Activated CD4-positive, alpha-beta memory T cell treated with anti-CD3 and anti-CD28 coated beads for 36 hours (primary cell): ENCODE measurements at regions of chr12 and their contacts with region 1.

Region 1: DNA sequence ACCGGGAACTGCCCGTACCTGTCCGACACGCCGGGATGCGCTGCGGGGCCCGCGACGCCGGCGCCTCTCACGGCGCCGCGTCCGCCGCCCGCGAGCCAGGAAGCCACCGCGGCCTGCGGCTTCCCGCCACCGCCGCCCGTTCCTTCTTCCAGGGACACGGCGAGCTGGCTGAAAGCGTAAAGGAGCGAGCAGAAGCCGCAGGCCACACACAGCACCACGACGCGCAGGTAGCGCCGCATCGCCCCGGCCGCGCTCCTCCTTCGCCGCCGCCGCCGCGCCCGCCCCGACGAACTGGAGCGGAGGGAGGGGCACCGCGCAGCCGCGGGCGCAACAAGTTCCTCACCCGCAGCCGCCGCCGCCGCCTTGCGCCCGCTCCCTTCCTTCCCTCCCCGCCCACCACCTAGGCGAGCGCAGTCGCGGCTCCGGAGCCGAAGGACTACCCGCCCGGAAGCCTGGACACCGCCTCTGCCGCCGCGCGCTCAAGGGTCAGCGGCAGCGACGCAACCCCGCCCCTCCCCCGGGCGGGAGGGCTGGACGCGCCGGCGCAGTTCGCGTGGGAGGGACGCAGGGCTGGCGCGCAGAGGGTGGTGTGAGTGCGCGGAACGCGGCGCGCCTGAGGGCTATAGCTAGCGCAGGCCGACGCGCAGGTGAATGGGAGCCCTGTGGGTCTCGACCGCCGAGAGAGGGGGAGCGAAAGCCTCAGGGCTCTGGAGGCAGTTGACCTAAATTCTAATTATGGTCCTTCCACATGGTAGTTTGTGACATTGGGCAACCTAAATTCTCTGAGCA is at the start of gene GXYLT1:
- DNase-seq: peak; percentile 88
- H3K4me3 Mint-ChIP-seq: peak within 1 kb of the TSS; percentile 93
- H3K27ac Mint-ChIP-seq: peak within 1 kb of the TSS; percentile 75
- H3K4me1 Mint-ChIP-seq: peaks cover 35% of the 10 kb centered on the region
- H3K27me3 Mint-ChIP-seq: no peaks in the 10 kb centered on the region
- total RNA-seq, gene GXYLT1: 7.0 to 8.3 TPM

Region 2: DNA sequence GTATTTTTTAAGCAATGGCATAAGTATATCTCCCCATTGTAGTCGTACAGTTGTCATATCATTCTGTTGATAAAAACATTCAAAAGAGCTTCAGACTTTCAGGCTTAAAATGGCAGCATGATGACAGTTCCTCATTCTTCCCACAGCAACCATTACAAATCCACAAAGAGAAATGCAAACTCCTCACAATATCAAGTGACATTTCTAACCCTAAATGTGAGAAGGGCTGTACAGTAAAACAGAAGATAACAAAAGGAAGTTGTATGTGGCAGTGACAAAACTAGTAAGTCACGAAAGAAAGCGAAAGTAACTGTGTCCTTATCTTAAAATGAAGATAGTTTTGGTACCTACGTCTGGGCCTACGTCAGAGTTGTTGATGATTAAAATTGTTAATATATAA is 46.6 kb before region 1 on chr12:
- CTCF ChIA-PET with region 1: no interaction called
- POLR2A ChIA-PET with region 1: no interaction called
- intact Hi-C with region 1: loop called (anchors 5 kb)
- DNase-seq: no peak
- H3K4me3 Mint-ChIP-seq: peak overlapping the region; percentile 71
- H3K27ac Mint-ChIP-seq: peak overlapping the region; percentile 85
- H3K4me1 Mint-ChIP-seq: peaks cover 29% of the 10 kb centered on the region
- H3K27me3 Mint-ChIP-seq: no peaks in the 10 kb centered on the region

Region 3: GRCh38 chr12:42217656-42218055 is 73.1 kb after region 1 on chr12:
- CTCF ChIA-PET with region 1: no interaction called
- POLR2A ChIA-PET with region 1: no interaction called
- intact Hi-C with region 1: loop called (anchors 5 kb)
- DNase-seq: no peak
- H3K4me3 Mint-ChIP-seq: no peak overlapping the region
- H3K27ac Mint-ChIP-seq: no peak overlapping the region
- H3K4me1 Mint-ChIP-seq: peaks cover 35% of the 10 kb centered on the region
- H3K27me3 Mint-ChIP-seq: no peaks in the 10 kb centered on the region

Region 4: DNA sequence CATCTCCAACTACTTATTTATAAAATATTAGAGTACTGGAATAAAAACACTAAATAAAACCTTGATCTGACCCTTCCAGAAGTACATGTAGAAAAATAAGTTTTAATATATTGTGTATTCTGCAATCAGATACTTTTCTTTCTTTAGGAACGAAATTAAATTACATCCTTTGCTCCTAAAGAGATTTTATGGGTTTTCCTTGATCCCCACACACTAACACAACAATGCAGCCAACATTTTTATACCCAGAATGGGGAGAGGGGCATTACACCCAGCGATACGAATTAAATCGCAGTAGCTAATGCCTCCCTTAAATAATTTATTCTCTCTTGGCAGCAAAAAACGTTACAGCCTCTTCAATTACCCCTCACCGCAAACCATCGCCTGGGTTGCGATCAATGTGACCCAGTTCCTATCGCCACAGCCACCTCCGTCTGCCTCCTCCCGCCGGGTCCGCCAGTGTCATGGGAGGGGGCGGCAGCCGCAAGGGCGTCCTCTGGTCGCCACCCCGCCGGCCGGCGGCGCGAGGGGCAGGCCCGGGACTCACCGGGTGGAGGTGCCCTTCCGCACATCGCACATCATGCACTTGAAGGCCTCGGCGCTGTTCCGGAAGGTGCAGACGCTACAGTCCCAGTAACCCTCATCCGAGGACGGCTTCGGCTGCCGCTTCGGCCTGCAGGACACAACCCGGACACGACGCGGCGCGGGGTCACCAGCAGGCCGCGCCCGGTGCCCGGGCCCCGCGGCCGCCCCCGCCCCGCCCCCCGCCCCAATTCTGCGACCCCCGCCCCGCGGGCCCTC is 92.7 kb after region 1 on chr12:
- CTCF ChIA-PET with region 1: no interaction called
- POLR2A ChIA-PET with region 1: interaction called, 6 read pairs
- intact Hi-C with region 1: loop called (anchors 1 kb)
- DNase-seq: peak; percentile 84
- H3K4me3 Mint-ChIP-seq: peak overlapping the region; percentile 87
- H3K27ac Mint-ChIP-seq: peak overlapping the region; percentile 56
- H3K4me1 Mint-ChIP-seq: peaks cover 34% of the 10 kb centered on the region
- H3K27me3 Mint-ChIP-seq: no peaks in the 10 kb centered on the region

Region 5: GRCh38 chr12:42360747-42361403 is 216.3 kb after region 1 on chr12:
- CTCF ChIA-PET with region 1: no interaction called
- POLR2A ChIA-PET with region 1: no interaction called
- intact Hi-C with region 1: loop called (anchors 5 kb)
- DNase-seq: no peak
- H3K4me3 Mint-ChIP-seq: no peak overlapping the region
- H3K27ac Mint-ChIP-seq: peak overlapping the region; percentile 50
- H3K4me1 Mint-ChIP-seq: peaks cover 38% of the 10 kb centered on the region
- H3K27me3 Mint-ChIP-seq: no peaks in the 10 kb centered on the region